Uterus (tissue), 4 donors: ENCODE measurements at regions of chr4 and their contacts with region 1.

Region 1: DNA sequence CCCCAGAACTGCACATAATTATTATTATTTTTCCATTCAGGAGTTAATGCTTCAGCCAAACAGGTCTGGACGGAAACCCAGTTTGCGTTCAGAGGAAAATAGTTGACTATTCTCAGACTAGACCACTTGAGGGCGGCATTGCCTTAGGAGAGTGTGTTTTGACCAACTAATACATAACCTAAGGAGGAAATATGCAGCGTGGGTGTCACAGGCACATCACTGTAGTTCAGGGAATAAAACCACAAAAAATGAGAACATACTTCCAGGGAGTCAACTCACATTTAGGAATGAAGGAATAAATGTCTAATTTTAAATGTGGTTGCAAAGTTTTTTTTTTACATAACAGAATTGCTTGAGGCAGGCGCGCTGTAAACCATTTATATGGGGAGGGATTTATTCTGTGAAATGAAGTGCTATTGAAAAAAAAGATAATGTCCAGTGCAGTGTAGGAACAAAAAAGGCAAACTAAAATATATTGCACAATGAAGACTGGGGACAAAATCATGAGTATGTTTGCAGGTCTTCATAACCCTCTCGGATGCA is 93.3 kb downstream of the SYNPO2 start:
- DNase-seq: peak; percentile 66 to 81
- H3K4me3 ChIP-seq: no peak overlapping the region
- H3K27ac ChIP-seq: peak overlapping the region; percentile 53 to 98
- H3K4me1 ChIP-seq: peaks cover 0 to 5% of the 10 kb centered on the region in 2 donors
- H3K27me3 ChIP-seq: no peaks in the 10 kb centered on the region
- CTCF ChIP-seq: peak; percentile 84 to 92 (median 90)
- POLR2A ChIP-seq: no peak

Region 2: DNA sequence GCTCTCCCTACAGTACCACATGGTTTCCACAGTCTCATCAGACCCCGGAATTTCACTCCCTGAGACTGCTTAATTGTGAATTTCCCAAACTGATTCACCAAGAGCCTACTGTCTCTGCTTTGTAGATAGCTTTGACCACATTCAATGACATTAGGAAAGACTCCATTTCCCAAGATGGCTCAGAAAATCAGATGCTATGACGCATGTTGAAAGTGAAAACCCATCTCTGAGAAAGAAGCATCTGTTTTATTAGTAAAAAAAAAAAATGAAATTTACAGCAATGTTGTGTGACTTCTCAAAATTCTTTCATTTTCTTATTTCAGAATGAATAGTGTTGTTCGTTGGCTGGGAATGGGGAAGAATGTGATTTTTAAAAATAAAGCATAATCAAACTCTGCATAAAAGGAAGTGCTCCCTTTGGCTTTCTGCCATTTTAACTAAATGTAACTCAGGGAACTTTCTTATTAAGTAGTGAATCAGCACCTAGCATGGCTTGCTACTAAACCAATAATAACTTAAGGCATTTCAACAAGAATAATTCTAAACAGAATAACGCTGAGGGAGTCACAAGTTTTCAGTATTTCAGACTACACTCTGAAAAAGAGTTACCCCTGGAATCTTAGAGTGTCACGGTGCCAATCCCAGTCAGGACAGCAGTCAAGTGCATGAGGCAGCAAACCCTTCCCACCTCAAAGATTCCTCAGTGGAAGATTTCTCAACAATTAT is 56.4 kb after region 1 on chr4:
- intact Hi-C with region 1: loop called (anchors 10 kb)
- DNase-seq: no peak
- H3K4me3 ChIP-seq: no peak overlapping the region
- H3K27ac ChIP-seq: peak overlapping the region; percentile 93 to 99
- H3K4me1 ChIP-seq: peaks cover 0 to 14% of the 10 kb centered on the region in 2 donors
- H3K27me3 ChIP-seq: no peaks in the 10 kb centered on the region
- CTCF ChIP-seq: no peak
- POLR2A ChIP-seq: no peak

Region 3: DNA sequence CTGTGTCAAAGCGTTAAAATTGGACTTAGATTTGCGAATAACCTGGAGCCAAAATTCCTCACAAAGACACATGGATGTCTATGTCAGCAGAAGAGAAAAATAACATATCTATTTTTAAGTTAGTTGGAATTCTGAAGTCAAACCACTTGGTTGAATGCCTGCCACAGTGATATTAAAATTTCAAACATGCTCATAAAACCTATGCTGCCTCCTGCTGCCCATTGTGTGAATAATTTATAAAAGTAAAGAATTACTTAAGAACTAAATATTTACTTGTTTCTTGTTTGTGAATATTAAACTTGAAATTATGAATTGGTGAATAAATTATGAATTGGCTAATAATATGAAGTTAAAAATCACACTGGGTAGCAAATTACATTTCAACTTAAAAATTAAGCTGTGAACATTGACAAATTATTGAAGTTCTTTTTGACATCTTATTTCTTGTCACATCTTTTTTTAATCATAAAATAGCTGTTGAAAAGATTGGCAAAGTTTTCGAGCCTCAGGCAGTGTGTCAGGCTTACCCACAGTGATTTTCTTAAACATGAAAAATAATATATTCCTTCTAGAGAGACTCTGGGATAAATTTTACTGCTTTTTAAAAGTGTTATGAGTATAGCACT is 304.6 kb after region 1 on chr4:
- intact Hi-C with region 1: loop called (anchors 5 kb)
- DNase-seq: peak in 1 of 2 donors; percentile 29
- H3K4me3 ChIP-seq: no peak overlapping the region
- H3K27ac ChIP-seq: peak overlapping the region in 1 of 2 donors; percentile 80
- H3K4me1 ChIP-seq: peaks cover 0 to 10% of the 10 kb centered on the region in 2 donors
- H3K27me3 ChIP-seq: no peaks in the 10 kb centered on the region
- CTCF ChIP-seq: peak; percentile 68 to 73 (median 71)
- POLR2A ChIP-seq: no peak